GM18951 (cell line): ENCODE measurements at regions of chr11 and their contacts with region 1.

Region 1: DNA sequence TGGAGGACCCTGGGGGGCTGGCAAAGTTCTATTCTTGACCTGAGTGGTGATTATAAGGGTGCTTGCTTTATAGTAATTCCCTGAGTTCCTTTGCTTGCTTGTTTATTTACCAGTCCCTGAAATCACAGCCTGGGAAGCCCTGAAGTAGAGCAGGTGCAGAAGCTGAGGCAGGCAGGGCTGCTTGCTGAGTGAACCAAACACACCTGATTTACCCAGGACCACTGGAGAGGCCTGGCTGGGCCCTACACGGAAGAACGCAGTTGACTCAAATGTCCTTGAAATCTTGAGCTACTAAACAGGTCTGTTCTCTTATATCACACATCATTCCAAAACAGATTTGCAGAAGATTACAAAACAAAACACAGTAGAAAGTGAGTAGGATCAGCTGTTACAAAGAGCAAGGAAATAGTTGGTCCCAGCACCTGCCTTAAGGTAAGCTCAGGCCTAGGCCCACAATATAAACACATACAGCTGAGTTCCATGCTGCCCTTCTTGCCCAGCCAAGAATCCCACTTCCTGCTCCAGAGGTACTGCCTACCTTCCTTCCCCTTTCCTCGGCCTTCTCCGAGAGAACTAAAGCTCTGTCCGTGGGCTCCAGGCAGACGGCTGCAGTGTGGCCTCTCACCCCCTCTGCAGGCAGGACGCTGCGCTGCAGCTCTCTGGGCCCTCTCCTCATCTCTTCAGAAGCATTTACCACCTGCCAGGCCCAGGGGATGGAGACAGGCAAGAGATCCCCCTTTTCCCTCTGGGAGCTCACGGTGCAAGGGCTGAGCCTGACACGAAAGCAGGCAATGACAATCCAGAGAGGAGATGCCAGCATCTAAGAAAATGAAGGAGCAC is 46.1 kb upstream of the SCUBE2 start:
- POLR2A ChIP-seq: no peak

Region 2: DNA sequence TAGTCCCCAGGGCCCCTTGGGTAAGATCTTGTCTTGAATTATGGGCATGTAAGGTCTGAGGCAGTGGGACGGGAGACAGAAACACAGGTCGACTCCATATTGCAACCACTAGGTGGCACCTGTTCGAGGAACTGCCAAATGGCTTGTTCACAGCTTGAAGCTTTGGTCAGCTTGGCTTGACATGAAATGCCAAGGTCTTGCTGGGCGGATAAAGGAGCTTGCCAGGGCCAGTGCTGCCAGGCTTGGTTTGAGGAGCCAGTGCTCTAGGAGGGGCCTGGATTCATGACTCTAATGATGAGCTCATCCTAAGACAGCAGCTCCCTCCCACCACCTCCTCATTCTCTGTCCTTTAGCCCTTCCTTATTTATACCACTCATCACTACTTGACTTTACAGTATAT is 121.8 kb before region 1 on chr11:
- in situ Hi-C with region 1: loop called (anchors 10 kb)
- POLR2A ChIP-seq: no peak